GM10248 (cell line): ENCODE measurements at regions of chr1 and their contacts with region 1.

Region 1: DNA sequence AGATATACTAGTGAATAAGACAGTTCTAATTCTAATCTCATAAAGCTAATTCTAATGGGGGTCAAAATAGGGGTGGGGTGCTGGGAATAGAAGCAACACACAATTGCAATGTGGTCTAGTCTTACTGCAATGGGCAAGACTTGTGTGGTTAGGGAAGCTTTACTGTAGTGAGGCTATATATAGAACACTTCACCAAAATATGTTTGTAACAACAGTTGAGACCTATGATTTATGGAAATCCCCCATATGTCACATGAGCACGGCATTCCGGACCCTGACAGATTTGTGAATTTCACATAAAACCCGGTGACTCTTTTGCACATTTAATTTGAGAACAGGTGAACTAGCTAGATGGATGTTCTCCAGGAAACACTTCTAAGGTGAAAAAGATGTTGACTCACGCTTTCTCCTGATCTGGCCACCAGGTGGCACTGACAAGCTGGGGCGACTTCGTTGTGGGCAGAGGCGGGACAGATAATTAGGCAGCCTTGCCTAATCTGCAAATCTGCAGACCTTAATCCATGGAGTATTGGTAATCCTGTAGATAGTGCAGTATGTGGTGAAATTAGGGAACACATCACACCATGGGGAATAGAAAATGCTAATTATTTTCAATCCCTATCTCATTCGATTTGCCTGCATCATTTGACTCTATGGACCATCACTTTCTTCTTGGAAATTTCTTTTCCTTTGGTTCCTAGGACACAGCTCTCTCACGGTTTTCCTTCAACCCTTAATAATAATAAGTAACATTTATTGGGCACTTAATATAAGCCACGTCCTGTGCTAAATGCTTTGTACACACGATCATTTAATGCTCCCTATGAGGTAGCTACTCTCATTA is 37.7 kb downstream of the KIAA0040 start:
- DNase-seq: peak; percentile 70
- CTCF ChIP-seq: peak; percentile 88

Region 2: GRCh38 chr1:175035865-175036264 is 119.0 kb before region 1 on chr1:
- CTCF ChIA-PET with region 1: interaction called, 17 read pairs
- POLR2A ChIA-PET with region 1: no interaction called
- DNase-seq: no peak
- CTCF ChIP-seq: no peak

Region 3: GRCh38 chr1:175174309-175175165 is 19.7 kb after region 1 on chr1:
- CTCF ChIA-PET with region 1: interaction called, 51 read pairs
- POLR2A ChIA-PET with region 1: interaction called, 3 read pairs
- DNase-seq: peak; percentile 27
- CTCF ChIP-seq: no peak

Region 4: DNA sequence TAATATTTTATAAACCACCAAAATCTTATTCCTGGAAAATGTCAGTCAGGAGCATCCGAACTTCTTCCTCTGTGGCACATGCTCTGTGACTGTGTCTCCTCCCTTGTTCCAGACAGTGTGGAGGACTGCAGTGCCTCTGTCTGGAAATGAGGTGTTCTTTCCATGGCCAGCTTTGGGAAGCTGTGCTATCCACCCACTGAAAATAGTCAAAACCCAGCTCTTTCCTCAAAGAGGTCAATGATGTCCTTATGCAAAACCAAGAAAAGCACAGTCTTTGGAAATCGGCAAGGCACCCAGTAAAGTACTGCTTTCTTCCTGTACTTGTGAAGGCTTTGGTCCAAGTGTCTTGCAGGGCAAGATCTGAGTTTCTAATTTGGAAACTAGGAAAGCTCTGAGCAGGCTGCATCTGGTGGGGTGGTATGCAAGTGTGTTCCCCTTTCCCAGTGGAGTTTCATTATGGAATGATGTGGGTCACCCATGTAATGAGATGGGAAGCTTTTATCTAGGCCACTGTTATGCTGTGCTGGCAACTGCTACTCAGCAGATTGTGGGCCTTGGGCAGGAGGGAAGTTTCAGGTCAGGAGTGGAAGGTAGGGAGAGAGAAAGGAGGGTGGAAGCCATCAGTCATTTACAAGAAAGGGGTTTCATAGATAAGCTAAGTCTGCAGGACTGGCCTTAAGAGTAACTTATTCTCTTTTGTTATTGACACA is 31.7 kb after region 1 on chr1:
- CTCF ChIA-PET with region 1: interaction called, 58 read pairs
- POLR2A ChIA-PET with region 1: no interaction called
- DNase-seq: no peak
- CTCF ChIP-seq: no peak

Region 5: DNA sequence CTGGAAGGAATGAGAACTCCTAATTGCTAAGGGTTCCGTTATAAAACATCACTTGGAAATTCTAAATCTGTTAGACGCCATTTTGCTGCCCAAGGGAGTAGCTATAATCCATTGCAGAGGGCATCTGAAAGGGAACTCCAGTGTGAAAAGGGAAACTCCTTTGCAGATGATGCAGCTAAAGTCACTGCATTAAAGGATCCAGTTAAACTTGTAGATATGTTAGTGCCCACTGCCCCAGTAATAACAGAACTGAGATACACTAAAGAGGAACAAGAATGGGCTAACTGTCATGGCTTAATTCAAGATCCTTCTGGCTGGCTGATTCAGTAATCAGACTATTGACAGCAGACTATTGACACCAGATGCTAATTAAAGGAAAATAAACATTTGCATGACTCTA is 119.5 kb after region 1 on chr1:
- CTCF ChIA-PET with region 1: interaction called, 10 read pairs
- POLR2A ChIA-PET with region 1: no interaction called
- DNase-seq: peak; percentile 14
- CTCF ChIP-seq: no peak

Region 6: DNA sequence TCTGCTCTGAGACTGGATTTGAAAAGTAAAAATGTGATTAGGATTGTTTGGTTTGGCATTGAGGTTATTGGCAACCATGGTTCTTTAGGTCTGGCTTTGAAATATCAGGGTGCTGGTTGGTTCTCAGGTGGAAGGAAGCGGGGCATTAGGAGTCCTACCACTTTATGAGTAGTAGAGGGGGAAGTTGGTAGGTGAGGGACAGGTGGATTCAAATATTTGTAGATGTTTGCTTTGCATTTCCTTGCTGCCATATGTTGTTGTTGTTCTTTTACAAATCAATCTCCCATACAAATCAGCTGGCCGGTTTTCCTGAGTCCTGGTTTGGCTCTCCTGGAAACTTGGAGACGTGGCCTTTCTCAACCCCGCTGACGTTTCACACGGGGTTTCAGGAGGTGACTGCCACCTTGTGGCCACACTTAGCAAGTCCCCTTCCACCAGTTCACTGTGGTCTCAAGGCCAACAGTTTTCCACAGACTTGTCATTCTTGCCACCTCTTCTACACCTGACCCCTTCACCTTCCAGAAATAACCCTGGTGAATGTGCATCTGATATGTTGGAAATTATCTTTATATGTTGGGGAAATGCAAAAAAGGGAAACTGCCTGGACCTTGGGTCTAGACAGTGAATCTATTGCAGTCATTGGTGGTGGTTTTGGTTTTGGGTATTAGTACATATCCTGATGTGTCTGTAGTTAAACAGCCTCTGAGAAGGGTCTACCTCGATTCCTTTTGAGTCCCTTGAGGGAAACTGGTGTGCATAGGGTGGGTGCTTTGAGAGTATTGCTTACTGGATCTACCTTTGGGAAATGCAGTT is 164.8 kb after region 1 on chr1:
- CTCF ChIA-PET with region 1: interaction called, 431 read pairs
- POLR2A ChIA-PET with region 1: no interaction called
- DNase-seq: peak; percentile 71
- CTCF ChIP-seq: peak; percentile 90

Region 7: DNA sequence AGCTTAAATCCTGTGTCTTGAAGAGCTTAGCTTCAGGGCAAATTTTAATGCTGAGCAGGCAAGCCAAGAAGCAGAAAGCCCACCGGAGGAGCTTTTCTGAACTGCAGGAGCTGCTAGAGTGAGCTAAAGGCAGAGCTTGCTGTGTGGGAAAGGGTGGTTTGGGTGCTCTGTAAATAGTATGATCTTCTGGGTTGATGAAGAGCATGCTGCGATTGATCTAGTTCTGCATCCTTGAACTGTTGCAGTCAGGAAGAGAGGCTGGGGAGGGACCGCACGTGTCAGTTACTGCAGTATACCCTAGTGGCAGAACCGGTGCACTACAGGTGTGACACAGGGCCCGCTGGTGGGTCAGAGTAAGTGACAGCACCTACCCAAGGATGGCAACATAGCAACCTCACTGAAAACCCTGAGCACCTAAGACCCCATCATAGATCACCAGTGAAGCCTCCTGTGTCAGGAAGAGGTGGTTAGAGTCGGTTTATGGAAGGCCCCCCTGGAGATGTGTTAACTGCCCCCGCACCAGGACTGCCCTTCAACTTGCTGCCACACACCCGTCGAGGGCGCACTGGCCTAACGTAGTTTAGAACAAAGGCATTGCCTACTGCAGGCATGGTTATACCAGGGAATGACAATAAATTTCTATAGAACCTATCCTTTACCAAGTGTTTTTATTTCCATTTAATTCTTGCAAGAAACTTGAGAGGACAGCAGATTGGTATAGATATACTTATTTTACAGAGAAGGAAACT is 183.7 kb after region 1 on chr1:
- CTCF ChIA-PET with region 1: interaction called, 23 read pairs
- POLR2A ChIA-PET with region 1: no interaction called
- DNase-seq: peak; percentile 39
- CTCF ChIP-seq: peak; percentile 51